IMR-90 (cell line): ENCODE measurements at regions of chr1 and their contacts with region 1.

Region 1: DNA sequence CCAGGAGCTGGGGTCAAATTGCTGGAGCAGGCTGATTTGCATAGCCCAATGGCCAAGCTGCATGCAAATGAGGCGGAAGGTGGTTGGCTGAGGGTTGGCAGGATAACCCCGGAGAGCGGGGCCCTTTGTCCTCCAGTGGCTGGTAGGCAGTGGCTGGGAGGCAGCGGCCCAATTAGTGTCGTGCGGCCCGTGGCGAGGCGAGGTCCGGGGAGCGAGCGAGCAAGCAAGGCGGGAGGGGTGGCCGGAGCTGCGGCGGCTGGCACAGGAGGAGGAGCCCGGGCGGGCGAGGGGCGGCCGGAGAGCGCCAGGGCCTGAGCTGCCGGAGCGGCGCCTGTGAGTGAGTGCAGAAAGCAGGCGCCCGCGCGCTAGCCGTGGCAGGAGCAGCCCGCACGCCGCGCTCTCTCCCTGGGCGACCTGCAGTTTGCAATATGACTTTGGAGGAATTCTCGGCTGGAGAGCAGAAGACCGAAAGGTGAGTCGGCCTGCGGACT is at the start of gene GADD45A:
- DNase-seq: peak; percentile 100
- ATAC-seq: peak; percentile 87
- H3K4me3 ChIP-seq: peak within 1 kb of the TSS; percentile 99
- H3K27ac ChIP-seq: peak within 1 kb of the TSS; percentile 98
- H3K4me1 ChIP-seq: peaks cover 12% of the 10 kb centered on the region
- H3K27me3 ChIP-seq: no peaks in the 10 kb centered on the region
- CTCF ChIP-seq: no peak
- POLR2A ChIP-seq: peak; percentile 99
- RAD21 ChIP-seq: peak; percentile 25
- total RNA-seq, gene GADD45A: 10.9 and 16.7 TPM in 2 replicates

Region 2: DNA sequence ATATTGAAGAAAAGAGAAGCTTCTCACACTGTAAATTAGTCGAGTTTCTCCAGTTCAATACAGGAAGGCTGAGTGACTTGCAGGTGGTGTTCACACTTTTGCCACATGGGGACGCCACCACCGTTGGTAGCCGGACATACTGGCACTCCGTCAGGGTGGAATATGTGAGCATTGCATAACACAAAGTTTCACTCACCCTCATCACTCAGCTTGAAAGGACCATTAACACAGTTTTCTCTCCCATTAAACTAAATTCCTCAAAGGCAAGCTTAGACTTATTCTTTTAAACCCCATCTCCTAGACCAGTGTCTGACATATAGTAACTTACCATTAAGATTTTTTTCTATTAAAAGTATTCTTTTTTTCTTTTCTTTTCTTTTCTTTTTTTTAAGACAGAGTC is 149.6 kb before region 1 on chr1:
- CTCF ChIA-PET with region 1: interaction called, 14 read pairs
- POLR2A ChIA-PET with region 1: interaction called, 7 read pairs
- dilution Hi-C with region 1: no loop called
- in situ Hi-C with region 1: no loop called
- intact Hi-C with region 1: loop called (anchors 1 kb)
- DNase-seq: peak; percentile 87
- ATAC-seq: peak; percentile 82
- H3K4me3 ChIP-seq: no peak overlapping the region
- H3K27ac ChIP-seq: no peak overlapping the region
- H3K4me1 ChIP-seq: peaks cover 2% of the 10 kb centered on the region; the same call in 1 of the 2 replicates
- H3K27me3 ChIP-seq: no peaks in the 10 kb centered on the region
- CTCF ChIP-seq: peak; percentile 99
- POLR2A ChIP-seq: 0 out of 2 replicates have a peak, but pooled peaks have one; percentile 21
- RAD21 ChIP-seq: peak; percentile 98

Region 3: GRCh38 chr1:67570473-67571143 is 114.5 kb before region 1 on chr1:
- CTCF ChIA-PET with region 1: no interaction called
- POLR2A ChIA-PET with region 1: interaction called, 11 read pairs
- dilution Hi-C with region 1: no loop called
- in situ Hi-C with region 1: loop called (anchors 25 kb)
- intact Hi-C with region 1: no loop called
- DNase-seq: peak; percentile 97
- ATAC-seq: peak; percentile 90
- H3K4me3 ChIP-seq: no peak overlapping the region
- H3K27ac ChIP-seq: peak overlapping the region; percentile 13
- H3K4me1 ChIP-seq: peaks cover 22% of the 10 kb centered on the region
- H3K27me3 ChIP-seq: no peaks in the 10 kb centered on the region
- CTCF ChIP-seq: no peak
- POLR2A ChIP-seq: no peak
- RAD21 ChIP-seq: no peak

Region 4: DNA sequence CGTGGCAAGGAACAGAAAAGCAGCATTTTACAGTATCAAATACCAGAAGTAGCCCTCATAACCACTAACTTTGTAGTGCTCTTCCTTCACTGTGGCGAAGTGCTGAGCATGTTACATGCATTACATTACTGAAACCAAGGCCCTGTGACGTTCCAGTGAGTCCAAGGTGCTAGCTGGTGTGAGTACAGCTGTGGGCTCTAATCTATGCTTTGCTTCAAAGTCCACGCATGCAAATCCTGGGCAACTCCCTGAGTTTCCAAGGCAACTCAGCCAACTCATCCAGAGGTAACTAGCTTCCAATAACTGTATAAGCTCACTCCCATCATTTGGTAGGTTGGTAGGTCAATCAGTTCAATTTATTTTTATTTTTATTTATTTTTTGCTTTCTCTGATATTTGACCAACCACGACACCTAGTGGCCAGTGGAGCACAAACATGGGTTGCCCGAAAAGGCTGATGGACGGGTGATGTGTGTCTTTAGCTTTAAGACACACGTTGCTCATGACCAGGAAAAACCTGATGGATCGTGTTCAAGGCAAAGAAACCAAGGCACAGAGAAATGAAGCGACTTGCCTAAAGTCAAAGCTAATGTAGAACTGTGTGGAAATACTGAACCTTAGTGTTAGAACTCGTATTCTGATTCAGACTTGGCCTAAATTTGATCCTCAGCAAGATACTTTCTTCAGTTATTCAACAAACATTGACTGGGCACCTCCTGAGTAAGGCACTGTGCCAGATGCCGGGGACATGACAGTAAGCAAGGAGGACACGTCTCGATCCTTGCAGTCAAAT is 75.1 kb after region 1 on chr1:
- CTCF ChIA-PET with region 1: interaction called, 11 read pairs
- POLR2A ChIA-PET with region 1: no interaction called
- dilution Hi-C with region 1: no loop called
- in situ Hi-C with region 1: loop called (anchors 5 kb)
- intact Hi-C with region 1: loop called (anchors 1 kb)
- DNase-seq: peak; percentile 86
- ATAC-seq: peak; percentile 79
- H3K4me3 ChIP-seq: no peak overlapping the region
- H3K27ac ChIP-seq: peak overlapping the region; percentile 28
- H3K4me1 ChIP-seq: peaks cover 19% of the 10 kb centered on the region
- H3K27me3 ChIP-seq: no peaks in the 10 kb centered on the region
- CTCF ChIP-seq: peak; percentile 78
- POLR2A ChIP-seq: no peak
- RAD21 ChIP-seq: peak; percentile 74

Region 5: DNA sequence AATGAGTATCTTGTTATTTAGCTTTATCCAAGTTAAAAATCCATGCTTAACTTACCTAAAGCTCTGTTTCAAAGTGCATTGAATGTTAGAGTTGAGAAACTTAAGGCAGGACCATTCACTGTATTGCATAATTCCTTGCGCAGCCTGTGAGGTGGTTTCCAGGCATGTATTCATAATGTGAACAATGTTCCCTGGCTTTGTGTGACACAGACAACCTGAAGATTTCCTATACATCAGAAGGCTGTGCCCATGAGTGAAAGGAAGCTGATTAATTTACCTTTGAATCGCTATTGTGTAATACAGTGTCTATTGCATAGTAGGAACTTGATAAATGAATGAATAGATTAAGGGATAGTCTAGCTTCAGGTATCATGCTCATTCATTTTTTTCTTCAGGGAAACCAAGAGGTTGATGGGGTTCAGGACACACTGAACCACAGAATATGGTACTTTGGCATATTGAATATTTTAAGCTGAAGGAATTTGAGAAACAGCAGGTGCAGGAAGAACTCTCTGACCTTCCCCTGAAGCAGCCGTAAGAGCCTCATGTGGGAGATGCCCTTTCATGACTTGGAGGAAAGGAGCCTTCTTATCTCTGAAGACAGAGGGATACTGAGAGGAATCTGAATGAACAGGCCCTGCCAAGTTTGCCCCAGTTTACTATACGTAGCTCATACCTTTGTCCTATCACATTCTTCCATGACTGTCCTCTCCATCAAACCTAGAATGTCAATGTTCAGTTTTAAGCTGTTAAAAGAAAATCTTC is 236.8 kb after region 1 on chr1:
- CTCF ChIA-PET with region 1: no interaction called
- POLR2A ChIA-PET with region 1: no interaction called
- dilution Hi-C with region 1: no loop called
- in situ Hi-C with region 1: no loop called
- intact Hi-C with region 1: no loop called
- DNase-seq: peak; percentile 36
- ATAC-seq: no peak
- H3K4me3 ChIP-seq: no peak overlapping the region
- H3K27ac ChIP-seq: no peak overlapping the region
- H3K4me1 ChIP-seq: no peaks in the 10 kb centered on the region
- H3K27me3 ChIP-seq: no peaks in the 10 kb centered on the region
- CTCF ChIP-seq: no peak
- POLR2A ChIP-seq: no peak
- RAD21 ChIP-seq: no peak

Region 6: GRCh38 chr1:68111519-68112436 is 426.7 kb after region 1 on chr1:
- CTCF ChIA-PET with region 1: no interaction called
- POLR2A ChIA-PET with region 1: no interaction called
- dilution Hi-C with region 1: no loop called
- in situ Hi-C with region 1: no loop called
- intact Hi-C with region 1: loop called (anchors 5 kb)
- DNase-seq: peak; percentile 93
- ATAC-seq: peak; percentile 85
- H3K4me3 ChIP-seq: no peak overlapping the region
- H3K27ac ChIP-seq: no peak overlapping the region
- H3K4me1 ChIP-seq: peaks cover 9% of the 10 kb centered on the region
- H3K27me3 ChIP-seq: no peaks in the 10 kb centered on the region
- CTCF ChIP-seq: peak; percentile 83
- POLR2A ChIP-seq: 0 out of 2 replicates have a peak, but pooled peaks have one; percentile 30
- RAD21 ChIP-seq: peak; percentile 95